ENCODE measurements at regions of chr7 and their contacts with region 1.

Region 1: GRCh38 chr7:99910976-99911375 is 8.4 kb downstream of the TRIM4 start:
- DNase-seq: no peak
- ATAC-seq: no peak
- H3K4me3 Mint-ChIP-seq: no peak overlapping the region
- H3K27ac Mint-ChIP-seq: no peak overlapping the region
- H3K4me1 Mint-ChIP-seq: no peaks in the 10 kb centered on the region
- H3K27me3 Mint-ChIP-seq: no peaks in the 10 kb centered on the region; the same call in none of the 2 replicates
- CTCF ChIP-seq: no peak

Region 2: DNA sequence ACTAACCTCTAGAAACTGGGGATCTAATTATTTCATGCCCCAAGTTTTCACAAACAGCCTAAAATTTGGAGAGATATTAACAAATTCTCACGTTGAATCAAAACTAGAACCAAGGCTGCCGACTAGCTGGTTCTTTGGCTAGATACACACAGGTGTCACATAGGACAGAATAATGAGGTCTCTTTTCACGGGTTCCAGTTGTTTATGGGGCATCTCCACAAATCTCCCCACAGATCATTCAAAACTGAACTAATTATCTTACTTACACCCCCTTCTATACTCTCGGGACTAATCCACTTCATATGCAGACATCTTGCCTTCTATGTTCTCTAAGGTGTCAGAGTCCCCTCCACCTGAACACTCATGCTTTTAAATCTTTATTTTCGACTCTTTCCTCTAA is 17.7 kb before region 1 on chr7:
- CTCF ChIA-PET with region 1: no interaction called
- POLR2A ChIA-PET with region 1: no interaction called
- DNase-seq: no peak
- ATAC-seq: no peak
- H3K4me3 Mint-ChIP-seq: no peak overlapping the region
- H3K27ac Mint-ChIP-seq: no peak overlapping the region
- H3K4me1 Mint-ChIP-seq: no peaks in the 10 kb centered on the region
- H3K27me3 Mint-ChIP-seq: no peaks in the 10 kb centered on the region; the same call in 1 of the 2 replicates
- CTCF ChIP-seq: no peak

Region 3: GRCh38 chr7:100081535-100082102 is 170.6 kb after region 1 on chr7 and contains the start of gene ZNF3:
- CTCF ChIA-PET with region 1: interaction called, 10 read pairs
- POLR2A ChIA-PET with region 1: no interaction called
- DNase-seq: peak; percentile 98
- ATAC-seq: peak; percentile 86
- H3K4me3 Mint-ChIP-seq: peak within 1 kb of the TSS; percentile 98
- H3K27ac Mint-ChIP-seq: peak within 1 kb of the TSS; percentile 95
- H3K4me1 Mint-ChIP-seq: peaks cover 23% of the 10 kb centered on the region
- H3K27me3 Mint-ChIP-seq: no peaks in the 10 kb centered on the region; the same call in 1 of the 2 replicates
- CTCF ChIP-seq: peak; percentile 86
- total RNA-seq, gene ZNF3: 38.1 to 48.3 TPM (median 39.1 TPM) in 3 replicates